ENCODE measurements at regions of chr9 and their contacts with region 1.

Region 1: DNA sequence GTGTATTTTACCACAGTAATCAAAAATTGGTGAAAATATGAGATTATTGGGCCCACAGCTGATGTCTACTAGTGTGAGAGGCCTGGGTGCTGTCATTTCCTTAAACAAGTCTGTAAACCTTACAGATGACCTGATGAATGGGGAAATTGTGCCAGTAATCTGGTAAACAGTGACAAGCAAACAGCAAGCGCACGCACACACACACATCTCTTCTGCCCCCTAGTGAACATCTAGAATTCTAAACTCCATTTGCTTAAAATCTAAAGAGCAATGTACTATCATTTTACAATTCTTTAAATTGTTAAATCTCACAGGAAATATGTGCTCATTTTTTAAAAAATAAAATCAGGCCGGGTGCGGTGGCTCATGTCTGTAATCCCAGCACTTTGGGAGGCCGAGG is 7.5 kb upstream of the RAPGEF1 start:
- DNase-seq: peak in 1 of 2 experiments; percentile 47
- H3K4me3 ChIP-seq: no peak overlapping the region
- H3K4me3 Mint-ChIP-seq: no peak overlapping the region
- H3K27ac Mint-ChIP-seq: no peak overlapping the region
- H3K4me1 ChIP-seq: peaks cover 10% of the 10 kb centered on the region; the same call in 1 of the 2 replicates
- H3K4me1 Mint-ChIP-seq: no peaks in the 10 kb centered on the region
- H3K27me3 ChIP-seq: no peaks in the 10 kb centered on the region; the same call in 1 of the 2 replicates
- H3K27me3 Mint-ChIP-seq: no peaks in the 10 kb centered on the region
- CTCF ChIP-seq: peak; percentile 44 to 61

Region 2: GRCh38 chr9:131502781-131503625 is 244.4 kb before region 1 on chr9 and contains the start of gene POMT1:
- CTCF ChIA-PET with region 1: no interaction called
- POLR2A ChIA-PET with region 1: no interaction called
- intact Hi-C with region 1: loop called (anchors 5 kb)
- DNase-seq: peak; percentile 90 to 93
- H3K4me3 ChIP-seq: peak within 1 kb of the TSS; percentile 89
- H3K4me3 Mint-ChIP-seq: peak within 1 kb of the TSS; percentile 90
- H3K27ac Mint-ChIP-seq: peak within 1 kb of the TSS; percentile 81
- H3K4me1 ChIP-seq: 0 out of 2 replicates have a peak, but pooled peaks cover 6% of the 10 kb centered on the region
- H3K4me1 Mint-ChIP-seq: peaks cover 16% of the 10 kb centered on the region
- H3K27me3 ChIP-seq: no peaks in the 10 kb centered on the region
- H3K27me3 Mint-ChIP-seq: no peaks in the 10 kb centered on the region
- CTCF ChIP-seq: no peak
- total RNA-seq, gene POMT1: 44.2 and 44.7 TPM in 2 replicates

Region 3: DNA sequence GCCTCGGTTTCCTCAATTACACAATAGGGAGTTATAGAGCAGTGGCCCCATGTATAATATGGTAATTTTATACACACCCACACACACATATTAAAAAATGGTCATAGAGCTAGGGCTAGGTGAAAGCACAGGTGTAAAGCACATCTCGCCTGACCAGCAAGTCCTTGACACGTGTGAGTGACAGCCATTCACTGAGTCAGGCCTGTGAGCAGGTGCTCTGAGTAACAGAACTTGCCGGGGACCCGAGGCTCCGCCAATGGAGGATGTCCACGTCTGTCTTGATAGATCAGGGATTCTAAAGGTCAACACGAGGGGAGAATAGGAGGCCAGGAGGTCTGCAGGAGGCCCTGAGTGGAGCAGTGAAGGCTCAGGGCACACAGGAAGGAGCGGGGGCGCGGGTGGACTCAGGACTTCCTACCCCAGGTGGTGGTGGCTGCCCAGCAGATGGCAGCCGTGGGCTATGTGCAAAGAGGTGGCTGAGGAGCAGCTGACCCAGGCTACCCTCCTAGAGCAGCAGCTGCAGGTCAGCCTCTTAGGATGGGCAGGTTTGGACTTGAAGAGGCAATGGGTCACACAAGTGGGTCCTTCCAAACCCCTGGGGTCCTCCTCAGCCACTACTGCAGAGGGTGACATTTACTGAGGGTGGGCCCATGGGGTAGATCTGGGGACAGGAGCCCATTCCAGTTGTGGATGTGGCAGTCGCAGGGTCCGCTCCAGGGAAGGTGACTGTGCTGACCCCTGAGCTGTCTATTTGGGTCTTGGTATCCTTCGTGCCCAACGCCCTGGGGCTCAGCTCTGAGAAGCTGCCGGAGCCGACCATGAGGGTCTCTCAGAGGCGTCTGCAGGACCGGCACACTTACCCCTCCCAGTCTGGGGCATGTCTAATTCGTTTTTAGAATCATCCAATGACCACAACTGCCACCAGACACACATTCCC is 156.2 kb before region 1 on chr9:
- CTCF ChIA-PET with region 1: interaction called, 4 read pairs
- POLR2A ChIA-PET with region 1: no interaction called
- intact Hi-C with region 1: loop called (anchors 1 kb)
- DNase-seq: peak; percentile 80 to 85
- H3K4me3 ChIP-seq: no peak overlapping the region
- H3K4me3 Mint-ChIP-seq: no peak overlapping the region
- H3K27ac Mint-ChIP-seq: peak overlapping the region; percentile 52
- H3K4me1 ChIP-seq: no peaks in the 10 kb centered on the region
- H3K4me1 Mint-ChIP-seq: no peaks in the 10 kb centered on the region
- H3K27me3 ChIP-seq: no peaks in the 10 kb centered on the region
- H3K27me3 Mint-ChIP-seq: no peaks in the 10 kb centered on the region
- CTCF ChIP-seq: peak; percentile 90 to 93

Measured in Caco-2 (cell line).